ENCODE measurements at regions of chr15 and their contacts with region 1.

Region 1: GRCh38 chr15:90610190-90610589 is 80.5 kb downstream of the CRTC3 start:
- DNase-seq: no peak
- H3K4me3 ChIP-seq: peak overlapping the region in 1 of 2 donors; percentile 20
- H3K27ac ChIP-seq: peak overlapping the region; percentile 74 to 80
- H3K4me1 ChIP-seq: peaks cover 9 to 31% of the 10 kb centered on the region in 2 donors
- H3K27me3 ChIP-seq: no peaks in the 10 kb centered on the region
- CTCF ChIP-seq: no peak

Region 2: DNA sequence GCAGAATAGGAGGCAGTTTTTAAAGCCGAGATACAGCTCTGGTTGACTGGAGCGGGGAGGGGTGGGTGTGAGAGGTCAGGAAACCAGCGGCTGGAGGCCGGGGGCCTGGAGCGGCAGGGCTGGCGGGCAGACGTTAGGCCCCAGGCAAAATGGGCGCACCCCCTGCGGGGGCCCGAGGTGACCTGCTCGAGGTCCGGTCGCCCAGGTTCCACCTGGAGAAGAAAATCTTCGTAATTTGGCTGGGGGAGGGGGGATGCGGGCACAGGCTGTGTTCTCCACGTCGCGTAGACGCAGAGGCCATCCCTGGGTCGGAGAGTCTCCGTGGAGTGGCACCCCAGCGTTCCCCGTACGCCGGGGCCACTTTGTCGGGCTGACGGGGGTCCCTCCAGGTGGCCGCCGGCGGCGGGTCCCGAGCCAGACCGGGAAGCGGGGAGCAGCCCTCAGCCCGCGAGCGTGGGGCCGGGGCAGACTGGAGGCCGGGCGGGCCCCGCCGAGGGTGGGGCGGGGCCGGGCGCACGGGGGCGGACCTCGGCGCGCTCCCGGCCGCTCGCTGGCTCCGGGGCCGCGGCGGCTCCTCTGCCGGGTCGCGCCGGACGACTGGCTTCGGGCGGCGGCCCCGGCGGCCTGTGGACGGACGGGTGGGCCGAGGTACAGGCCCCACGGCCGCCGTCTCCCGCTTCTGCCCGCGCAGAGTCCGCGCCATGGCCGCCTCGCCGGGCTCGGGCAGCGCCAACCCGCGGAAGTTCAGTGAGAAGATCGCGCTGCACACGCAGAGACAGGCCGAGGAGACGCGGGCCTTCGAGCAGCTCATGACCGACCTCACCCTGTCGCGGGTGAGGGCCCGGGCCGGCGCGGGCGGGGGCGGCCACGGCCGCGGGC is 80.6 kb before region 1 on chr15 and contains the start of gene CRTC3:
- intact Hi-C with region 1: loop called (anchors 2 kb)
- DNase-seq: peak in 1 of 2 donors; percentile 75
- H3K4me3 ChIP-seq: peak within 1 kb of the TSS; percentile 86 to 90
- H3K27ac ChIP-seq: peak within 1 kb of the TSS; percentile 88 to 95
- H3K4me1 ChIP-seq: peaks cover 6 to 20% of the 10 kb centered on the region in 2 donors
- H3K27me3 ChIP-seq: no peaks in the 10 kb centered on the region
- CTCF ChIP-seq: no peak
- total RNA-seq, gene CRTC3: 35.5 TPM

Region 3: GRCh38 chr15:90594301-90594701 is 15.9 kb before region 1 on chr15:
- intact Hi-C with region 1: loop called (anchors 2 kb)
- DNase-seq: peak; percentile 83 to 97
- H3K4me3 ChIP-seq: peak overlapping the region in 1 of 2 donors; percentile 37
- H3K27ac ChIP-seq: peak overlapping the region; percentile 76 to 82
- H3K4me1 ChIP-seq: peaks cover 16 to 71% of the 10 kb centered on the region in 2 donors
- H3K27me3 ChIP-seq: no peaks in the 10 kb centered on the region
- CTCF ChIP-seq: no peak